Activated T-helper 1 cell treated with anti-CD3 and anti-CD28 coated beads, Interleukin-12 subunit alpha, Interleukin-12 subunit beta, Interleukin-2, Interleukin-4 antibody, amounts not matched to agents 30 ng/mL and 10 ng/mL and 1 ng/mL, durations not matched to agents 14 hours and 24 hours and 36 hours (primary cell): ENCODE measurements at regions of chr5 and their contacts with region 1.

Region 1: DNA sequence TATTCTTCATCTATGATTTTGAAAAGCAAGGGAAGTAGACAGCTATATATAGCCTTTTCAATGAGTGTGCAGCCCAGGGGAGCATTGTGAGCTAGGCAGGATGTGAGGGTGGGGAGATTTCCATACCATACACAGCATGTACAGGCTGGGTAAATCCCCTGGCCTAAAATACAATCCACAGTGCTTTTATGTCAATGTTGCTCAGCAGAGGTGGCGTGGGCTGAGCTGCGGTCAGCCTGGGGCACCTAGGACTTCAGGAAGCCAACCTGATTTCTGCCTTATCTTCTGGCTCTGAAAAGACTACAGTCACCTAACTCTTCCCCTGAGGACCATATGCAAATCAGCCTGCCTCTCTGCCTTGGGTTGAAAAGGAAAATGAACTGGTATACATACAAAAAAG is 6.3 kb upstream of the GARIN3 start:
- DNase-seq: peak; percentile 84
- H3K4me3 Mint-ChIP-seq: peak overlapping the region; percentile 68
- H3K27ac Mint-ChIP-seq: peak overlapping the region; percentile 91
- H3K4me1 Mint-ChIP-seq: peaks cover 78% of the 10 kb centered on the region
- H3K27me3 Mint-ChIP-seq: no peaks in the 10 kb centered on the region

Region 2: DNA sequence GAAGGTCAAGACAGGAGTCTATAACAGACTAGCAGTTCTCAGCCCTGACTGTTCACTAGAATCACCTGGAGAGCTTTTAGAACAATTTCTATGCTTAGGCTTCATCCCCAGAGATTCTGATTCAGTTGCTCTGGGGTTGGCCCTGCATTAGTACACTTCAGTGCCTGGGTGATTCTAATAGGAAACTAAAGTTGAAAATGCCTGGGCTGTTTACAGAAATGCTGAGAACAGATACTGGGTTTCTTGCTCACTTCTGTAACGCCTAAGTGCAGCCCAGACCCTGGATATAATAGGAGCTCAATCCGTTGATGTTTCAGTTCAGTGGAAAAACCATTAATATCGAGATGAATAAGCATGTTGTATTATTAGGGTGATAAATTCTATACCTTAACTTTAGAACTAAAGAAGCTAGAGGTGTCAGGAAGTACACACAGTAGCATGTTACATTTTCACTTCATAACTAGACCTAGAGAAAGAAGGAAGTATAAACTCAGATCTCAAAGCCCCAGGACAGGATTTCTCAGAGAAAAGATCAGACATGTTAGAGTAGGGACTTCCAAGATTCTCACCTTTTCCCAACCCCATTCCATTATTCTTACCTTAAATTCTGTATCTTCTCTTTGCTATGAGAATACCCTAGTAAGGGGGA is 83.9 kb before region 1 on chr5:
- intact Hi-C with region 1: no loop called
- DNase-seq: no peak
- H3K4me3 Mint-ChIP-seq: no peak overlapping the region
- H3K27ac Mint-ChIP-seq: peak overlapping the region; percentile 29
- H3K4me1 Mint-ChIP-seq: peaks cover 15% of the 10 kb centered on the region
- H3K27me3 Mint-ChIP-seq: no peaks in the 10 kb centered on the region

Region 3: DNA sequence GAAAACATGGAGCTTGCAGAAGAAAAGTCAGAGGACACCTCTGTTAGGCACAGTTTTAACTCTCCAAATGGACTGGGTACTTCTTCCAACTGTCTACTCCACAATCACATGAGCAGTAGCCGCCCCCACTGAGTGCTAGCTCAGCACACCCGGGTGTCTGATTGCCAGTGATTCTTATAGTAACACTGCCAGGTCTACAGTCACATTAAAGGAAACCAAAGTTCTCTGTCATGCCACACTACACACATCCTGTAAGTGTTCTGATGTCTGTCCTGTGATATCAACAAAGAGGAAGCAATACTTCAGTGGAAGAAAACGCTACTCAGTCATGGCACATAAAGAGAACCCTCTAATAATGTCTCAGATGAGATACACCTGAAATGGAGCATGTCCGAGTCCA is 63.4 kb before region 1 on chr5 and contains the start of gene HAVCR2:
- intact Hi-C with region 1: loop called (anchors 2 kb)
- DNase-seq: peak; percentile 65
- H3K4me3 Mint-ChIP-seq: peak within 1 kb of the TSS; percentile 91
- H3K27ac Mint-ChIP-seq: peak within 1 kb of the TSS; percentile 94
- H3K4me1 Mint-ChIP-seq: peaks cover 63% of the 10 kb centered on the region
- H3K27me3 Mint-ChIP-seq: no peaks in the 10 kb centered on the region
- total RNA-seq, gene HAVCR2: 128 and 129 TPM in 2 replicates

Region 4: GRCh38 chr5:157159209-157159751 is 13.1 kb before region 1 on chr5:
- intact Hi-C with region 1: loop called (anchors 1 kb)
- DNase-seq: no peak
- H3K4me3 Mint-ChIP-seq: peak overlapping the region; percentile 49
- H3K27ac Mint-ChIP-seq: peak overlapping the region; percentile 86
- H3K4me1 Mint-ChIP-seq: peaks cover 64% of the 10 kb centered on the region
- H3K27me3 Mint-ChIP-seq: no peaks in the 10 kb centered on the region

Region 5: DNA sequence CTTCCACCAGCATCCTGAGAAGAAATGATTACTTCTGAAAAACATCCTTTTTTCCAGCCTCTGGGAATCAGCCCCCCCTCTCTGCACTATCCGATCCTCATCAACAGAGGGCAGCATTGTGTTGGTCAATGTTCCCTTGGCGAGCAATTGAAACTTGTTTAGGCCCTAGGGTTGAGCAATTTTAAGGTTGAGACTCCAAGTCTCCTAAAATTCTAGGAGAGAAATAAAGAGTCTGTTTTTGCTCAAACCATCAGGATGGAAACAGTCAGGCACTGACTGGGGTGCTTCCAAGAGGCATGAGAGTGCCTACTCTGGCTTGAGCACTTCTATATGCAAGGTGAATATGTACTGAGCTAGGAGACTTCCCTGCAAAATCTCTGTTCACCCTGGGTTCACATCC is 81.1 kb after region 1 on chr5:
- intact Hi-C with region 1: loop called (anchors 1 kb)
- DNase-seq: no peak
- H3K4me3 Mint-ChIP-seq: peak overlapping the region; percentile 68
- H3K27ac Mint-ChIP-seq: peak overlapping the region; percentile 97
- H3K4me1 Mint-ChIP-seq: peaks cover 93% of the 10 kb centered on the region
- H3K27me3 Mint-ChIP-seq: no peaks in the 10 kb centered on the region

Region 6: GRCh38 chr5:157603333-157604190 is 431.2 kb after region 1 on chr5:
- intact Hi-C with region 1: loop called (anchors 2 kb)
- DNase-seq: peak; percentile 74
- H3K4me3 Mint-ChIP-seq: peak overlapping the region; percentile 59
- H3K27ac Mint-ChIP-seq: peak overlapping the region; percentile 88
- H3K4me1 Mint-ChIP-seq: peaks cover 79% of the 10 kb centered on the region
- H3K27me3 Mint-ChIP-seq: no peaks in the 10 kb centered on the region